ENCODE measurements at regions of chr1 and their contacts with region 1.

Region 1: DNA sequence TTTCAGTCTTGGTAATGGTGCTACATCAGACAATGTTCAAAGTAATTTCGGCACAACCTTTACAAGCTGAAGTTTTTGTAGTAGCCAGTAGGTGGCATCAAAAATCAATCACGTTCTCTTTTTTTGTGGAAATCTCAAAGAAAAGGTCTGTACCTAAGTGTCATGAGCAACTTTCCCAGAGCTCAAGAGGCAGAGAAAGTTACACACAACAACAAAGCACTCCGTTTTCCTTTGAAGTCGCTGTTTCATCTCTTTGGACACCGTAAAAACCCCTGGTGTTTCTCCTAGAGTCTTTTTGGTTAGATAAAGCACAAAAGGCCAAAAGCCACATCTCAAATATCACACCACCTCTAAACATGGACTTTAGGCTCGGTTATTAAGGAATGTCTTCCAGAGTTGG is 131.6 kb downstream of the LHX8 start:
- DNase-seq: no peak
- H3K4me3 ChIP-seq: no peak overlapping the region
- H3K27ac ChIP-seq: no peak overlapping the region
- H3K4me1 ChIP-seq: no peaks in the 10 kb centered on the region
- H3K27me3 ChIP-seq: no peaks in the 10 kb centered on the region
- CTCF ChIP-seq: peak; percentile 45

Region 2: GRCh38 chr1:75632350-75632949 is 366.7 kb after region 1 on chr1:
- intact Hi-C with region 1: loop called (anchors 5 kb)
- DNase-seq: no peak
- H3K4me3 ChIP-seq: no peak overlapping the region
- H3K27ac ChIP-seq: no peak overlapping the region
- H3K4me1 ChIP-seq: no peaks in the 10 kb centered on the region
- H3K27me3 ChIP-seq: no peaks in the 10 kb centered on the region
- CTCF ChIP-seq: peak; percentile 48

Measured in colonic mucosa (tissue), 4 donors.